Esophagus squamous epithelium (tissue), 5 donors: ENCODE measurements at regions of chr11 and their contacts with region 1.

Region 1: DNA sequence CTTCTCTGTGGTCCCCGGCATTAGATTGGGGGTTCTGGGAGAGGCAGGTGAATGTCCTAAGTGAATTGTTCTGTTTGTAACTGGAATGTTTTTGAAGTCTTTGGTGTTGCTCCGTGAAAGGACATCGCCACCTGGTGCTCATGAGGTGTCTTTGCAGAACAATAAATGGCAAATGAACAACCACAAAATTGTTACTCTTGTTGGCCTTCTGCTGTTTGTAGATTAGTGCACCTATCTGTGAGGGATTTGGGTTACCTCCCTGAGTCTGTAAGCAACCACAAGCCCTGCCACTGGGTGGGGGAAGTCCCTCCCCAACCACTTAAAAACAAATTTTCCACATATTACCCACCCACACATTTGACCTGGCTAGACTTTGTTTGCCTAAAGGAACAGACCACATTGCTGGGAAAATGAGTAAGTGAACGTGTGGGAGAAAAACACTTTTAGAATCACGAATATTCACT is 4.7 kb downstream of the MPEG1 start:
- DNase-seq: no peak
- H3K4me3 ChIP-seq: peak overlapping the region in 1 of 4 donors; percentile 16
- H3K27ac ChIP-seq: peak overlapping the region in 2 of 4 donors; percentile 21 to 29
- H3K4me1 ChIP-seq: peaks cover 0 to 22% (median 6%) of the 10 kb centered on the region in 3 donors
- H3K27me3 ChIP-seq: no peaks in the 10 kb centered on the region
- CTCF ChIP-seq: peak; percentile 66 to 80 (median 71)
- POLR2A ChIP-seq: no peak

Region 2: GRCh38 chr11:59142530-59143507 is 65.2 kb before region 1 on chr11 and contains the start of gene FAM111A:
- intact Hi-C with region 1: no loop called
- DNase-seq: peak; percentile 36
- H3K4me3 ChIP-seq: peak within 1 kb of the TSS; percentile 77 to 86 (median 80)
- H3K27ac ChIP-seq: peak within 1 kb of the TSS; percentile 94 to 99 (median 96)
- H3K4me1 ChIP-seq: peaks cover 7 to 46% (median 18%) of the 10 kb centered on the region in 3 donors
- H3K27me3 ChIP-seq: no peaks in the 10 kb centered on the region
- CTCF ChIP-seq: peak in 4 of 6 experiments; percentile 10 to 24 (median 19)
- POLR2A ChIP-seq: peak in 1 of 4 donors; percentile 51
- total RNA-seq, gene FAM111A: 15.0 to 23.3 (median 16.7) TPM

Region 3: GRCh38 chr11:59158206-59159068 is 49.6 kb before region 1 on chr11:
- intact Hi-C with region 1: loop called (anchors 10 kb)
- DNase-seq: no peak
- H3K4me3 ChIP-seq: no peak overlapping the region
- H3K27ac ChIP-seq: no peak overlapping the region
- H3K4me1 ChIP-seq: peaks cover 0 to 5% (median 0%) of the 10 kb centered on the region in 3 donors
- H3K27me3 ChIP-seq: peaks cover 0 to 16% (median 0%) of the 10 kb centered on the region in 4 donors
- CTCF ChIP-seq: peak; percentile 71 to 84 (median 78)
- POLR2A ChIP-seq: no peak

Region 4: GRCh38 chr11:59171508-59172322 is 36.3 kb before region 1 on chr11 and contains the start of gene DTX4:
- intact Hi-C with region 1: loop called (anchors 5 kb)
- DNase-seq: peak; percentile 67
- H3K4me3 ChIP-seq: peak within 1 kb of the TSS; percentile 56 to 90 (median 68)
- H3K27ac ChIP-seq: peak within 1 kb of the TSS; percentile 49 to 89 (median 79)
- H3K4me1 ChIP-seq: peaks cover 19 to 43% (median 26%) of the 10 kb centered on the region in 3 donors
- H3K27me3 ChIP-seq: peaks cover 0 to 13% (median 0%) of the 10 kb centered on the region in 4 donors
- CTCF ChIP-seq: peak; percentile 75 to 98 (median 95)
- POLR2A ChIP-seq: peak in 2 of 4 donors; percentile 5 to 9
- total RNA-seq, gene DTX4: 2.4 to 8.4 (median 4.6) TPM